ENCODE measurements at regions of chr1 and their contacts with region 1.

Region 1: DNA sequence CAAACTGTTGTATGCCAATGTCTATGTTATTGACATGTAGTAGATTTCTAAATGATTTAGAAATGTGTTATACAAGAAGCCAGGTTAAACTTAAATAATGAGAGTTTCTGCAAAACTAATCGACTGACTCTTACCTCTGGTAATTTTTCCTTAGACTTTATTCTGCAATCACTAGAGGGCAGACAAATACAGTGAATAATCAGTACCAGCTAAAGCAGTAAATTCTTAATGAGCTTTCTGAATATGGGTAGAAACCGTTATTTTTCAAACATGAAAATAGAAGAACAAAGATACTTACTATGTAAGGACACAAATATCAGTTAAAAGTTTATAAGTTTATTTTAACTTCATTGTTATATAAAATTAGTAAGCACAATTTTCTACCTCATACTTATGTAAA is 97.9 kb upstream of the RGS1 start:
- DNase-seq: peak in 1 of 35 experiments; percentile 66
- ATAC-seq: peak in 3 of 4 experiments; percentile 40 to 81 (median 43)
- H3K4me3 ChIP-seq: no peak overlapping the region
- H3K4me3 Mint-ChIP-seq: no peak overlapping the region
- H3K27ac ChIP-seq: no peak overlapping the region
- H3K27ac Mint-ChIP-seq: no peak overlapping the region
- H3K4me1 ChIP-seq: no peaks in the 10 kb centered on the region
- H3K4me1 Mint-ChIP-seq: no peaks in the 10 kb centered on the region
- H3K27me3 ChIP-seq: peaks cover 0 to 4% of the 10 kb centered on the region in 2 experiments
- H3K27me3 Mint-ChIP-seq: peaks cover 0 to 5% of the 10 kb centered on the region in 2 donors

Region 2: DNA sequence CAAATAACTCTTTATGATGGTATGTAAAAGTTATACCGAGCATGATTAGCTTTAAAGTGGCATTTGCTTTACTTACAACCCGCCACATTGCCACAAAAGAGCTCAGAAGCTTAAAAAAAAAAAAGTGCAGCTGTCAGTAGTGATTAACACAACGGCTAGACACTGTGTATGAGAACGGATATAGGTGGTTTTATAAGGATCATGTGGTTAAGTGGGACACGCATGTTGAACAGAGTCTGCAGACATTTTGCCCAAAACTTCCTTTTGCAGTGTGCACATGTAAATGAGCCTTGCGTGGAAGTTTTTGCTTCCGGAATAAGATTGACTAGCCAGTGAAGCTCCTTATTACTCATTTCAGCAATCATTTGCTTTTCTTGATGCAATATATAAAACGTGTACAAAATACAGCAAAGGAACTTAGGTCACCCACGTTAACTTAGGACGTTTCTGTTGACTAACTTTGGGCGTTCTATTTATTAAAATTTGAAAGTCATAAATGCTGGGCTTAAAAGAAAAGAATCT is 39.2 kb after region 1 on chr1:
- CTCF ChIA-PET with region 1: interaction called in 1 of 2 experiments, 22 read pairs
- POLR2A ChIA-PET with region 1: interaction called, 6 to 10 read pairs
- DNase-seq: peak in 34 of 35 experiments; percentile 8 to 93 (median 56)
- ATAC-seq: peak; percentile 95 to 99 (median 98)
- H3K4me3 ChIP-seq: peak overlapping the region in 1 of 2 donors; percentile 9
- H3K4me3 Mint-ChIP-seq: peak overlapping the region; percentile 61 to 64 (median 61)
- H3K27ac ChIP-seq: peak overlapping the region; percentile 74
- H3K27ac Mint-ChIP-seq: peak overlapping the region; percentile 86 to 93
- H3K4me1 ChIP-seq: peaks cover 8 to 22% of the 10 kb centered on the region in 2 experiments
- H3K4me1 Mint-ChIP-seq: peaks cover 34 to 67% (median 48%) of the 10 kb centered on the region in 3 donors
- H3K27me3 ChIP-seq: no peaks in the 10 kb centered on the region
- H3K27me3 Mint-ChIP-seq: no peaks in the 10 kb centered on the region

Region 3: DNA sequence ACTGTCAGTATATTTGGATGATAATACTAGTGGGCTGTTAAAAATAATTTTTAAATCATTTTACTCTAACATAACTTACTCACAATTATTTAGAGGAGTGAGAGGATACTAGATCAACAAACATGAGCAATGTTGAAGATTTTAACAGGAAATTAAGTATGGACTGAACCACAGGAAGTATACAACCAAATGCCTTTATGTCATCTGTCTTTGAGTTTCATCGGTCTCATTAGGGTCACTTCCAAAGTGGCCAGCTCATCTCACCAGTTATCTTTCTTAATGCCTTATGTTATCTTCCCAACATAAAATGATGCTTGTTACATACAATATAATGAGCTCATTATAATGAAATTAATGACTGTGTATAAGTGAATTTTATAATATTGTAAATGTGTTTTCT is 96.4 kb after region 1 on chr1:
- CTCF ChIA-PET with region 1: interaction called, 13 to 28 read pairs
- POLR2A ChIA-PET with region 1: interaction called in 1 of 2 experiments, 4 read pairs
- DNase-seq: no peak
- ATAC-seq: no peak
- H3K4me3 ChIP-seq: no peak overlapping the region
- H3K4me3 Mint-ChIP-seq: no peak overlapping the region
- H3K27ac ChIP-seq: peak overlapping the region; percentile 62
- H3K27ac Mint-ChIP-seq: peak overlapping the region in 1 of 2 donors; percentile 78
- H3K4me1 ChIP-seq: peaks cover 12 to 49% of the 10 kb centered on the region in 2 experiments
- H3K4me1 Mint-ChIP-seq: peaks cover 66 to 79% (median 77%) of the 10 kb centered on the region in 3 donors
- H3K27me3 ChIP-seq: no peaks in the 10 kb centered on the region
- H3K27me3 Mint-ChIP-seq: no peaks in the 10 kb centered on the region

Region 4: GRCh38 chr1:192609110-192610079 is 131.8 kb after region 1 on chr1:
- CTCF ChIA-PET with region 1: interaction called, 59 to 67 read pairs
- POLR2A ChIA-PET with region 1: interaction called in 1 of 2 experiments, 5 read pairs
- DNase-seq: peak; percentile 5 to 84 (median 72)
- ATAC-seq: peak; percentile 89 to 99 (median 92)
- H3K4me3 ChIP-seq: peak overlapping the region in 1 of 2 donors; percentile 25
- H3K4me3 Mint-ChIP-seq: peak overlapping the region; percentile 7 to 57 (median 29)
- H3K27ac ChIP-seq: peak overlapping the region; percentile 14
- H3K27ac Mint-ChIP-seq: peak overlapping the region; percentile 85 to 86
- H3K4me1 ChIP-seq: peaks cover 8 to 9% of the 10 kb centered on the region in 2 experiments
- H3K4me1 Mint-ChIP-seq: peaks cover 13 to 21% (median 15%) of the 10 kb centered on the region in 3 donors
- H3K27me3 ChIP-seq: no peaks in the 10 kb centered on the region
- H3K27me3 Mint-ChIP-seq: no peaks in the 10 kb centered on the region

Region 5: DNA sequence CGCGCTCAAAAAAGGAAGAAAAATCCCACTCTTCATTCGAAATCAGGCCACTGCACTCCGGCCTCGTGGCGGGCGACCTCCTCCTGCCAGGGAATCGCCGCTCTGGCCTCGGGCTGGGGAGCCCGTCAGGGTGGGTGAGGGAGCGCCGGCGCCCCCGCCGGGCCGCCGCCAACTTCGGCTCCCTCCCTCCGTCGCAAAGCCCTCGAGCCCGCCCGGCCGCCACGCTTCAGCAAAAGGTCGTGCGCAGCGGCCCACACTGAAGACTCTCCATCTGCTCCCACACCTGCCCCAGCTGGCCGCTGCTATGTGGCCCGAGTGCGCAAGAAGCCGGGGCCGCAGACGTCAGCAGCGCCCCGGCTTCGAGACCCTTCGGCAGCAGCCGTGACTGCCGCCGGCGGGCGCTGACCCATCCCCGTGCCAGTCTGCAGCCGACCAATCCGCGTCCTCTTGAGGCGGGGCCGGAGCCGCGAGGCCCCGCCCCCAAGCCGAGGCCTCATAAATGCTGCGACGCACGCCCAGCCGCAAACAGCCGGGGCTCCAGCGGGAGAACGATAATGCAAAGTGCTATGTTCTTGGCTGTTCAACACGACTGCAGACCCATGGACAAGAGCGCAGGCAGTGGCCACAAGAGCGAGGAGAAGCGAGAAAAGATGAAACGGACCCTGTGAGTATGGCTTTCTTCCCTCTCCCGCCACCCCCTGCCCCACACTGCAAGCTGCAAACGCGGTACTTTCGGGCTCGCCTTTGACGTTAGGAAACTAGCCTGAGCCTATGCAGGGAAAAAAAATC is 331.1 kb after region 1 on chr1 and contains the start of gene RGS2:
- CTCF ChIA-PET with region 1: interaction called, 7 to 24 read pairs
- POLR2A ChIA-PET with region 1: interaction called in 1 of 2 experiments, 3 read pairs
- DNase-seq: peak; percentile 74 to 93 (median 85)
- ATAC-seq: peak; percentile 92 to 97 (median 95)
- H3K4me3 ChIP-seq: peak within 1 kb of the TSS; percentile 81 to 87
- H3K4me3 Mint-ChIP-seq: peak within 1 kb of the TSS; percentile 97 to 98 (median 97)
- H3K27ac ChIP-seq: peak within 1 kb of the TSS; percentile 77
- H3K27ac Mint-ChIP-seq: peak within 1 kb of the TSS; percentile 92 to 97
- H3K4me1 ChIP-seq: peaks cover 2 to 18% of the 10 kb centered on the region in 2 experiments
- H3K4me1 Mint-ChIP-seq: peaks cover 33 to 41% (median 34%) of the 10 kb centered on the region in 3 donors
- H3K27me3 ChIP-seq: no peaks in the 10 kb centered on the region
- H3K27me3 Mint-ChIP-seq: no peaks in the 10 kb centered on the region
- total RNA-seq, gene RGS2: 13.9 to 129 (median 20.7) TPM

Measured in T-cell (primary cell).